K562 (cell line): ENCODE measurements at regions of chr4 and their contacts with region 1.

Region 1: DNA sequence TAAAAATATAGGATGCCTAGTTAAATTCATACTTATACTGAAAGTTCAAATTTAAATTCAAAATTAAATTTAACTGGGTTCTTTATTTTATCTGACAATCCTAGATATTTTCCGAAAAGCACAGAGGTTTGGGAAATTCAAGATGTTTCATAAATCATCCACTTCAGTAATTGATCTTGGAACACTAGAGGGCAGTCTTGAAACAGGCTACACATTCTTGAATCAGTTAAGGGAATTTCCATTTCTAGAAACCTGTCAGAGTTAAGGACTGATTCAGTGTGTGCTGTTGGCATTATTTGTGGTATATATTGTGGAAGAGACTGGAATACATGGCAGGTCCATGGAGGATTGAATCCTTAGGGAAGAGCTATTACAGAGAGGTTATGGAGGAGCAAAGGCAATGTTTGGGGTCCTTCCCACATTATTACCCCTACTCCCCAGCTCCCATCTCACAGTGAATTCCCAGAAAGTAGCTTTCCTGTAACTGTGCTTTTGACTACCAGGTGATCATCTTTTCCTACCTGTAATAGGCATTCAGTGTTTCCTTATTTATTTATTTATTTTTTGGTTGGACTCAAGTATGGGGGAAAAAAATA is 92.9 kb downstream of the EGF start:
- DNase-seq: peak; percentile 20 to 65 (median 40)
- ATAC-seq: peak; percentile 80
- H3K4me3 ChIP-seq: no peak overlapping the region
- H3K27ac ChIP-seq: no peak overlapping the region
- H3K4me1 ChIP-seq: 0 out of 5 replicates have a peak, but pooled peaks cover 0 to 2% of the 10 kb centered on the region in 2 experiments
- H3K27me3 ChIP-seq: no peaks in the 10 kb centered on the region
- CTCF ChIP-seq: peak; percentile 65 to 93 (median 68); a peak in 5 of 6 replicates
- EP300 ChIP-seq: no peak
- POLR2A ChIP-seq: no peak
- RAD21 ChIP-seq: peak; percentile 86 to 92

Region 2: GRCh38 chr4:109952612-109953011 is 52.9 kb before region 1 on chr4:
- CTCF ChIA-PET with region 1: no interaction called
- POLR2A ChIA-PET with region 1: no interaction called
- in situ Hi-C with region 1: no loop called
- intact Hi-C with region 1: no loop called
- DNase-seq: no peak
- ATAC-seq: no peak
- H3K4me3 ChIP-seq: no peak overlapping the region
- H3K27ac ChIP-seq: no peak overlapping the region
- H3K4me1 ChIP-seq: no peaks in the 10 kb centered on the region
- H3K27me3 ChIP-seq: no peaks in the 10 kb centered on the region
- CTCF ChIP-seq: no peak; a peak in 1 of 6 replicates
- EP300 ChIP-seq: no peak
- POLR2A ChIP-seq: no peak
- RAD21 ChIP-seq: no peak

Region 3: DNA sequence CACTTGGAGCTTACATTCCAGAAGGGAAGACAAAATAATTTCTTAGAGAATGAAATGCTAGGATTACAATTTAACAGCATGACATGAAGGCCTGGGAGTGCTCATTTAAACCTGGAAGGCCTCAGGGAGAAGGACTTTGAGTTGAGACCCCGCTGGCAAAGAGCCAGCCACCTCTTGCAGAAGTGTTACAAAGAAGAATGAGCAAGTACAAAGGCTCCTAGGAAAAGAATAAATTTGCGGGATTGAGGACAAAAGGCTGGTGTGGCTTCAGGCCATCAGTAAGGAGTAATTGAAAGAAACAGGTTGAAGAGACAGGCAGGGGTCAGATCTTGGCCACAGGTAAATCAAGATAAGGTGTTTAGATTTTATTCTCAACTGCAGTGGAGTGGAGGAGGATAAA is 195.9 kb after region 1 on chr4:
- CTCF ChIA-PET with region 1: no interaction called
- POLR2A ChIA-PET with region 1: no interaction called
- in situ Hi-C with region 1: no loop called
- intact Hi-C with region 1: loop called (anchors 10 kb)
- DNase-seq: no peak
- ATAC-seq: no peak
- H3K4me3 ChIP-seq: no peak overlapping the region
- H3K27ac ChIP-seq: no peak overlapping the region
- H3K4me1 ChIP-seq: peaks cover 19 to 20% of the 10 kb centered on the region in 2 experiments; a peak in 4 of 5 replicates
- H3K27me3 ChIP-seq: no peaks in the 10 kb centered on the region
- CTCF ChIP-seq: no peak
- EP300 ChIP-seq: no peak
- POLR2A ChIP-seq: no peak
- RAD21 ChIP-seq: no peak

Region 4: DNA sequence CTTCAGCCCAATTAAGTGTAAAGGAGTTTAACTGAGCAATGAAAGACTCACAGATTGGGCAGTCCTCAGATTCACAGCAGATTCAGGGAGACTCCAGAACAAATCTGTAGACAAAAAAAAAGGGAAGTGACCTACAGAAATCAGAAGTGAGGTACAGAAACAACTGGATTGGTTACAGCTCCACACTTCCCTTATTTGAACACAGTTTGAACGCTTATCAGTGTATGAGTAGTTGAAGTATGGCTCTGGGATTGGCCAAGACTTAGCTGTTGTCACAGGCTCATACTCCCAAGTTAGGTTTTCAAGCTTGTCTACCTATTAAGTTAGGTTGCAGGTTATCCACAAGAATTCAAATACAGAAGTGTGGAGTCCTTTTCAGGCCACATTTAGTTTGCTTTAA is 305.2 kb after region 1 on chr4:
- CTCF ChIA-PET with region 1: no interaction called
- POLR2A ChIA-PET with region 1: no interaction called
- in situ Hi-C with region 1: no loop called
- intact Hi-C with region 1: loop called (anchors 2 kb)
- DNase-seq: no peak
- ATAC-seq: peak; percentile 80
- H3K4me3 ChIP-seq: no peak overlapping the region
- H3K27ac ChIP-seq: no peak overlapping the region
- H3K4me1 ChIP-seq: no peaks in the 10 kb centered on the region
- H3K27me3 ChIP-seq: no peaks in the 10 kb centered on the region; a peak in 1 of 5 replicates
- CTCF ChIP-seq: no peak
- EP300 ChIP-seq: no peak
- POLR2A ChIP-seq: no peak
- RAD21 ChIP-seq: no peak

Region 5: DNA sequence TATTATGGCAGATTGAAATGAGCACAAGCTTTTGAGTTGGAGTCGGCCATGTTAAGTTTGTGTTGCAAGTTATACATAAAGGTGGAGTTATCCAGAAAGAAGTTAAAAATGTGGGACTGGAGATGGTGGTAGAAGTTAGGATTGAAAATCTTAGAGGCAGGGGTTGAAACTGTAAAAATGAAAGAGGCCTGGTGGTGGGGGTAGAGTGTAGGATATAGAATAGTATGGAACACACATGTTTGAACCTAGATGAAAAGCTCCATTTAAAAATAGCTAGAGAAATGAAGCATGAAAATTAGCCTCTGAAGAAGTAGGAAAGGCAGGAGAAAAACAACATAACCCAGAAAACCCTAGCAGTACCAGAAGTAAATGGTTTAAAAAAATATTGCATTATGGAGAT is 338.6 kb after region 1 on chr4:
- CTCF ChIA-PET with region 1: interaction called, 3 read pairs
- POLR2A ChIA-PET with region 1: no interaction called
- in situ Hi-C with region 1: no loop called
- intact Hi-C with region 1: loop called (anchors 10 kb)
- DNase-seq: peak in 2 of 4 experiments; percentile 6 to 15
- ATAC-seq: peak; percentile 73
- H3K4me3 ChIP-seq: no peak overlapping the region
- H3K27ac ChIP-seq: no peak overlapping the region
- H3K4me1 ChIP-seq: no peaks in the 10 kb centered on the region
- H3K27me3 ChIP-seq: no peaks in the 10 kb centered on the region
- CTCF ChIP-seq: peak; percentile 20 to 50 (median 25); a peak in 2 of 6 replicates
- EP300 ChIP-seq: no peak
- POLR2A ChIP-seq: no peak
- RAD21 ChIP-seq: peak; percentile 51 to 53

Region 6: GRCh38 chr4:110516106-110516922 is 510.8 kb after region 1 on chr4:
- CTCF ChIA-PET with region 1: interaction called, 252 read pairs
- POLR2A ChIA-PET with region 1: interaction called, 4 read pairs
- in situ Hi-C with region 1: no loop called
- intact Hi-C with region 1: loop called (anchors 1 kb)
- DNase-seq: peak; percentile 44 to 67 (median 51)
- ATAC-seq: peak; percentile 97
- H3K4me3 ChIP-seq: no peak overlapping the region
- H3K27ac ChIP-seq: no peak overlapping the region
- H3K4me1 ChIP-seq: no peaks in the 10 kb centered on the region
- H3K27me3 ChIP-seq: no peaks in the 10 kb centered on the region
- CTCF ChIP-seq: peak; percentile 69 to 81 (median 76)
- EP300 ChIP-seq: no peak
- POLR2A ChIP-seq: no peak
- RAD21 ChIP-seq: peak; percentile 31 to 48